ENCODE measurements at regions of chr22 and their contacts with region 1.

Region 1: GRCh38 chr22:28829358-28830181 is 29.2 kb upstream of the XBP1 start:
- DNase-seq: peak; percentile 84
- ATAC-seq: peak; percentile 83
- H3K4me3 ChIP-seq: no peak overlapping the region
- H3K4me3 Mint-ChIP-seq: no peak overlapping the region
- H3K27ac ChIP-seq: no peak overlapping the region
- H3K27ac Mint-ChIP-seq: no peak overlapping the region
- H3K4me1 ChIP-seq: peaks cover 0 to 7% of the 10 kb centered on the region in 2 donors
- H3K4me1 Mint-ChIP-seq: peaks cover 4% of the 10 kb centered on the region
- H3K27me3 ChIP-seq: no peaks in the 10 kb centered on the region
- H3K27me3 Mint-ChIP-seq: no peaks in the 10 kb centered on the region
- CTCF ChIP-seq: peak; percentile 99

Region 2: GRCh38 chr22:28594797-28595462 is 234.6 kb before region 1 on chr22:
- CTCF ChIA-PET with region 1: interaction called, 249 read pairs
- POLR2A ChIA-PET with region 1: no interaction called
- intact Hi-C with region 1: no loop called
- DNase-seq: peak; percentile 38
- ATAC-seq: peak; percentile 43
- H3K4me3 ChIP-seq: no peak overlapping the region
- H3K4me3 Mint-ChIP-seq: no peak overlapping the region
- H3K27ac ChIP-seq: no peak overlapping the region
- H3K27ac Mint-ChIP-seq: no peak overlapping the region
- H3K4me1 ChIP-seq: no peaks in the 10 kb centered on the region
- H3K4me1 Mint-ChIP-seq: no peaks in the 10 kb centered on the region
- H3K27me3 ChIP-seq: no peaks in the 10 kb centered on the region
- H3K27me3 Mint-ChIP-seq: no peaks in the 10 kb centered on the region
- CTCF ChIP-seq: peak; percentile 89

Region 3: DNA sequence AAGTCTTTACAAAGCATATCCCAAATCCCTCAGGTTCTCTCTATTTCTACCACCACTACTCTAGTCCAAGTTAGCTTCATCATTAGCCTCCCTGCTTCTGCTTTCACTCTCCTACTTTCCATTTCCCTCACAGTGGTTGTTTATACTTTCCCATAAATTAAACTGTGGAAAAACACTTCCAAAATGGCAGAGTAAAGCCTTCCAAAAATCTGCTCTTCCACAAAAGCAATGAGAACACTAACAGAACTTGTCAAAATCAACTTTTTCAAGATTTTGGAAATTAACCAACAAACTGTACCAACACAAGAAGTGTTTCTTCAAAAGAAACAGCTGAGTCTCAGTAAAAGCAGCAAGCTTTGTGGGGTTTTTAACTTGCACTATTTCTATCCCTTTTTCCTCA is 221.8 kb before region 1 on chr22:
- CTCF ChIA-PET with region 1: interaction called, 249 read pairs
- POLR2A ChIA-PET with region 1: no interaction called
- intact Hi-C with region 1: no loop called
- DNase-seq: no peak
- ATAC-seq: no peak
- H3K4me3 ChIP-seq: no peak overlapping the region
- H3K4me3 Mint-ChIP-seq: no peak overlapping the region
- H3K27ac ChIP-seq: no peak overlapping the region
- H3K27ac Mint-ChIP-seq: no peak overlapping the region
- H3K4me1 ChIP-seq: no peaks in the 10 kb centered on the region
- H3K4me1 Mint-ChIP-seq: no peaks in the 10 kb centered on the region
- H3K27me3 ChIP-seq: peaks cover 0 to 8% (median 0%) of the 10 kb centered on the region in 4 experiments
- H3K27me3 Mint-ChIP-seq: peaks cover 31% of the 10 kb centered on the region
- CTCF ChIP-seq: no peak

Region 4: GRCh38 chr22:28800308-28801077 is 29.1 kb before region 1 on chr22 and contains the start of gene XBP1:
- CTCF ChIA-PET with region 1: interaction called, 13 read pairs
- POLR2A ChIA-PET with region 1: no interaction called
- intact Hi-C with region 1: no loop called
- DNase-seq: peak; percentile 94
- ATAC-seq: peak; percentile 97
- H3K4me3 ChIP-seq: peak within 1 kb of the TSS; percentile 71 to 98 (median 91)
- H3K4me3 Mint-ChIP-seq: peak within 1 kb of the TSS; percentile 98
- H3K27ac ChIP-seq: peak within 1 kb of the TSS; percentile 63 to 96
- H3K27ac Mint-ChIP-seq: peak within 1 kb of the TSS; percentile 96
- H3K4me1 ChIP-seq: peaks cover 27 to 40% of the 10 kb centered on the region in 2 donors
- H3K4me1 Mint-ChIP-seq: peaks cover 51% of the 10 kb centered on the region
- H3K27me3 ChIP-seq: no peaks in the 10 kb centered on the region
- H3K27me3 Mint-ChIP-seq: no peaks in the 10 kb centered on the region
- CTCF ChIP-seq: no peak
- total RNA-seq, gene XBP1: 16.8 and 18.2 TPM in 2 replicates

Region 5: DNA sequence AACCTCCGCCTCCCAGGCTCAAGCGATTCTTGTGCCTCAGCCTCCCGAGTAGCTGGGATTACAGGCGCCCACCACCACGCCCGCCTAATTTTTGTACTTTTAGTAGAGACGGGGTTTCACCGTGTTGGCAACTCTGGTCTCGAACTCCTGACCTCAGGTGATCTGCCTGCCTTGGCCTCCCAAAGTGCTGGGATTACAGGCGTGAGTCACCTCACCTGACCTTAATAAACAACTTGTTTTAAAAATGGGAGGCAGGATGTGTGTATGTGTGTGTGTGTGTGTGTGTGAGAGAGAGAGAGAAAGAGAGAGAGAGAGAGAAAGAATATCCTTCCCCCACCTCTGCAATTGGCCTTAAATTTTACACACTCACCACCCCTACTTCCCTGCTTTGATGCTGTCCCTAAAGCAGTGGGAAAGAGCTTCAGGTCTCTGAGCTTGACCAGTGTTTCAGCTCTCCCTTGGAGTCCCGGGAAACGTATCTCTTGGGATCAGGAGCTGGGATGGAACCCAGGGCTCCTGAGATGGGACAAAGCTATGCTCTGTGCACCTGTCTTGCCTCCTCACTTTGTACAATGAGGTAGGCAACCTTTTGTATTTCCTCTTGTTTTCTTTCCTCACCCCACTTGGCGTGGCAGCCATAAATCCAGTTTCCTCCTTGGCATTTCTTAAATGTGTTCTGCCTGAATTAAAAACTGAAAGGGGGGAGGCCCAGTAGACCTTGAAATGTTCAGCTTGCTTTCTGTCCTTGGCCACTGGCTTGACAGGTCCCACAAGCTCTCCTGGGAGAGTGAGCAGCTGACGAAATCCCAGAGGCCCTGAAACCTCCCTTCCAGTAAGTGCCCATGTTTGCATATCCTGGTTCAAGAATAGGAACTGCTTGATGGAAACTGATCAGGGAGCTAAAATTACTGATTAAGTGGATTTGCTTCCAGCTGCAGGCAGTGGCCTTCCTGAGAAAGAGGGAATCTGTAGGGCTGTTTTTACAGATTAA is 11.4 kb before region 1 on chr22:
- CTCF ChIA-PET with region 1: interaction called, 39 read pairs
- POLR2A ChIA-PET with region 1: no interaction called
- intact Hi-C with region 1: no loop called
- DNase-seq: no peak
- ATAC-seq: no peak
- H3K4me3 ChIP-seq: no peak overlapping the region
- H3K4me3 Mint-ChIP-seq: no peak overlapping the region
- H3K27ac ChIP-seq: no peak overlapping the region
- H3K27ac Mint-ChIP-seq: peak overlapping the region; percentile 37
- H3K4me1 ChIP-seq: peaks cover 13 to 23% of the 10 kb centered on the region in 2 donors
- H3K4me1 Mint-ChIP-seq: peaks cover 29% of the 10 kb centered on the region
- H3K27me3 ChIP-seq: no peaks in the 10 kb centered on the region
- H3K27me3 Mint-ChIP-seq: no peaks in the 10 kb centered on the region
- CTCF ChIP-seq: no peak

Region 6: GRCh38 chr22:29040385-29041275 is 211.1 kb after region 1 on chr22:
- CTCF ChIA-PET with region 1: interaction called, 20 read pairs
- POLR2A ChIA-PET with region 1: no interaction called
- intact Hi-C with region 1: loop called (anchors 1 kb)
- DNase-seq: peak; percentile 77
- ATAC-seq: peak; percentile 54
- H3K4me3 ChIP-seq: no peak overlapping the region
- H3K4me3 Mint-ChIP-seq: no peak overlapping the region
- H3K27ac ChIP-seq: no peak overlapping the region
- H3K27ac Mint-ChIP-seq: no peak overlapping the region
- H3K4me1 ChIP-seq: peaks cover 0 to 2% of the 10 kb centered on the region in 2 donors
- H3K4me1 Mint-ChIP-seq: no peaks in the 10 kb centered on the region
- H3K27me3 ChIP-seq: peaks cover 0 to 8% (median 3%) of the 10 kb centered on the region in 4 experiments
- H3K27me3 Mint-ChIP-seq: peaks cover 6% of the 10 kb centered on the region
- CTCF ChIP-seq: peak; percentile 96